ENCODE measurements at regions of chr4 and their contacts with region 1.

Region 1: DNA sequence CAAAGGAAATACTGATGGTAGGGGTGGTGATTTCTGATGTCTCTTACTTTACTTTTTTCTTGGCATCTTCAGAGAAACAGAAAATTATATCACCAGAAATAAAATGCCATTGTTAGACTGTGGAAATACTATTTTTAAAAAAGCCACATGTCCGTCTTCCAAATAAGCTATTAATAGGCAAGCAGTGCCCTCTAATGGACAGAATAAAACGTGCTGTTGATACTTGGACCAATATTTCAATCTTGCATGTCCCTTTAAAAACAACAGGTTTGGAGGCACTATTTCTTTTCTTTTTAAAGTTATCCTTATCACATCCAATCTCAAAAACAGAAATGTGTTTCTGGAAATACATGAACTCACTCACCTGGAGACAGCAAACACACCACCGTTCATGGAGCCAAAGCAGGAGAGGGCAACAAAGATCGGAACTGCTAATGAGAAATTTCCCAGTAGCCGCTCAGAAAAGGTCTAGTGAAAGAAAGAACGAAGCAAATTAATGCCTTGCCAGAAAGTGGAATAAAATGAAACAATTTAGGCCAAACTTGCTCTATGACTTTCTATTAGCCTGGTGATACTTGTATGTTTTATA is 59.2 kb downstream of the SLC7A11 start:
- DNase-seq: no peak

Region 2: GRCh38 chr4:138222046-138222445 is 39.1 kb after region 1 on chr4:
- intact Hi-C with region 1: no loop called
- DNase-seq: no peak

Region 3: DNA sequence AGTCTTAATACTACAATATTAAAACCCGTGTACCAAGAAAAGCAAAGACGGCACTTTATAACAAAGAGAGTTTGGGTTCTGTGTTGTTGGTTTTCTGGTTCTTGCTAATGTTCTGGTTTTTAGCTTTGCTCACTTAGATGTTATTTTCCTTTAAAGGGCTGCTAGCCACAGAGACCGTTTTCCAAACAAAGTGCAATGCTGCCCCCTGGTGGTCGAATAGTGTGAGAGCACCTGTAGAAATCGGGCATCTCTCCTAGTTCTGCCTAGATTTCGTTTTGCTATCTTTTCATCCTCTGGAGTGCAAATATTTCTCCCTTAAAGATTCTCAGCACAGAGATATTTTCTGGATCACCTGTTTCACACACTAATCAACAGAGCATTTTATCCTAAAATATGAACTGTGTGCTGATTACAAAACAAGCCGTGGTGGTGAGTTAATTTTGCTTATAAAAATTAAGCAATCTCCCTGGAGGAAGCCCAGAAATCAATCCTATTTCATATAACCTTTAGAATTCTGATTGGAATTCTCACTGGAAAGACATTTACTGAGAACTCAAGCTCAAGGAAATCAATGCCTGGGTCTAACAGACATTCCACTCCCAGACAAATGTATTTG is 498.2 kb after region 1 on chr4:
- intact Hi-C with region 1: loop called (anchors 5 kb)
- DNase-seq: peak; percentile 81

Region 4: DNA sequence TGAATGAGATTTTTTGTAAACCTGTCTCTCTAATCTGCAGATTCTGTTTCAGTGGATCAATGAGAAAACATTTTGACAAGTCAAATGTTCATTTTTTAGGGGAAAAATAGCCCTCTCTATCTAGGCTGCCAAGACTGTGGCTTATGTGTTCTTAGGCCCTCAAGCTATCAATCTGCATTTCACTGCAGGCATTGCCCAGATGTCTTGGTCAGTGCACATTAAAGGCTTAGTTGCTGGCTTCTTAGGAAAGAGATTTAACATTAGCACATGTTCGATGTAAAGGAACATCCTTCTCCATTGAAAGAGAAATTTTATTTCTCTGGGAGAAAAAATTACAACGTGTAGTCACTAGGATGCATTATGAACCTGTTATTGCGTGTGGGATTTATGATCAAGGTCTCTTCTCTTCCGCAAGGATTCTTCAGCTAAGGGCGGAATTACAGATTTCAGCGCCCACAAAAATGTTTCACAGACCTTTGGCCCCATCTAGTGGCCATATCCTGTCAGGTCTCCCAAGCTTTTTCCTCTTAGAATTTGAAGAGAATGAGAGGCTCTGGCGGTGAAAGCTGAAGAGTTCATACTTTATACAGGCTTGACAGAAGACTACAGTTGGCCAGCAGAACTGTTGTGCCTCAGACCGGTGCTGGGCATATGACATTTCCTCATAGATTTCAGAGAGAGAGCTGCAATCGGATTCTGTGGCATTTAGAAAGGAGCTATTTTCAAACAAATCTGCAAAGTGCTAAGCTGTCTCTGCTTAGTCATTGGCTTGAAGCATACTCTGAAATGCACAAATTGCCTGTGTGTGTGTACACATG is 688.0 kb after region 1 on chr4:
- intact Hi-C with region 1: loop called (anchors 5 kb)
- DNase-seq: no peak